ENCODE measurements at regions of chr12 and their contacts with region 1.

Region 1: DNA sequence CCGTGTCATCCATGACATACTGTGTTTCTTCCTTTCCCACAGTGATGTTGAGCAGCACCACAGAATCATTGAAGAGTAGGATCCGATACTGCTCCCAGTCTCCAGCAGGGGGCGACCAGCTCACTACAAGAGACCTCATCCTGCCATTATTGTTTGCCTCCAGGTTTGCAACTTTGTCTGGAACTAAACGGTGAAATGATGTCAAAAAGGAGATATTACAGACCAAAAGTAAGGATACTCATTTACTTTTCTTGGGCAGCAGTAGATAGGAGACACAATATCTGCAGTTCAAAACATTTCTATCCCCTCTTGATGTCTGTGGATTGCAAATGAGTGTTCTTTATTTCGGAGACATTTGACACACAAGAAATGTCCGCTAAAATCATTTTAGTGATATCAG is 47.2 kb downstream of the PTPRB start:
- DNase-seq: peak; percentile 62 to 63
- ATAC-seq: peak; percentile 84 to 99 (median 93)
- H3K4me3 ChIP-seq: no peak overlapping the region
- H3K4me3 Mint-ChIP-seq: no peak overlapping the region
- H3K27ac ChIP-seq: no peak overlapping the region
- H3K27ac Mint-ChIP-seq: peak overlapping the region in 1 of 2 donors; percentile 3
- H3K4me1 ChIP-seq: no peaks in the 10 kb centered on the region
- H3K4me1 Mint-ChIP-seq: peaks cover 0 to 6% of the 10 kb centered on the region in 2 donors
- H3K27me3 ChIP-seq: no peaks in the 10 kb centered on the region
- H3K27me3 Mint-ChIP-seq: peaks cover 0 to 3% of the 10 kb centered on the region in 2 donors
- CTCF ChIP-seq: peak; percentile 83

Region 2: DNA sequence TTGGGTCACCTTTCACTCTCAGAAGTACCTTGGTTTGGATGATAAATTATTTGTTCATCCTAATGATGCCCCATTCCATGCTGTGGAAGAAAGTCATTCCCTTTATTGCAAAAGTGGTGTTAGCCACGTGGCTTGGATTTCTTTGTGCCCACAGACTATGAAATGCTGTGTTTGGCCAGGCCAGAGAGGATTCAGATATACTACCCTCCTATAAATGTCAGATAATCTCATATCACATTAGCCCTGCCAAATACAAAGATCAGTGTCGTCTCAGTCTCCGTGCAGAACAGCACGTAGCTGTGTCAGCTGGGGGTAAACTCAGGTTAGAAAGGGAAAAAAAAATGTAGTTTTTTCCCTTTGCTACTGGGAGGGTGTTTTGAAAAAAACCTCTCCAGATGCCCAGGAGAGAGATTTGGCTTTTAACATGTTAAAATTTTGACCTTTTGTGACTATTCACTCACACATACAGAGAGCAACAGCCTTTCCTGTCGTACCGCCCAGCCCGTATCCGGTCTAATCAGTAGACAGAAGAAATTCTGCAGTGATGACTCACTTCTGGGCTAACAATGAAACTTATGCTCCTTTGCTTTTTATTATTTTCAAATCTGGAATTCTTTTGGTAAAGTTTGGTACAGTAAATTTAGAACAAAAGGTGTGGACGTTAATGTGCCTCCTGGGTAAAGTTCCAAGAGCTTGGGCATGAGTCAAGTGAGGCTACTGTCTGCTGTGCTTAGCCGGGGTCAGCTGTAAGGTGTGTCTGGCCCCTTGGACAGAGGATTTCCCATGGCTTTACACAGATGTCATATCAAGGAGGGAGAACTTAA is 55.7 kb after region 1 on chr12:
- intact Hi-C with region 1: loop called (anchors 10 kb)
- DNase-seq: peak; percentile 11 to 46
- ATAC-seq: peak; percentile 96 to 98 (median 96)
- H3K4me3 ChIP-seq: peak overlapping the region; percentile 11
- H3K4me3 Mint-ChIP-seq: peak overlapping the region; percentile 88
- H3K27ac ChIP-seq: peak overlapping the region; percentile 97
- H3K27ac Mint-ChIP-seq: peak overlapping the region; percentile 92 to 96
- H3K4me1 ChIP-seq: peaks cover 15% of the 10 kb centered on the region
- H3K4me1 Mint-ChIP-seq: peaks cover 42 to 51% of the 10 kb centered on the region in 2 donors
- H3K27me3 ChIP-seq: no peaks in the 10 kb centered on the region
- H3K27me3 Mint-ChIP-seq: no peaks in the 10 kb centered on the region
- CTCF ChIP-seq: no peak

Region 3: DNA sequence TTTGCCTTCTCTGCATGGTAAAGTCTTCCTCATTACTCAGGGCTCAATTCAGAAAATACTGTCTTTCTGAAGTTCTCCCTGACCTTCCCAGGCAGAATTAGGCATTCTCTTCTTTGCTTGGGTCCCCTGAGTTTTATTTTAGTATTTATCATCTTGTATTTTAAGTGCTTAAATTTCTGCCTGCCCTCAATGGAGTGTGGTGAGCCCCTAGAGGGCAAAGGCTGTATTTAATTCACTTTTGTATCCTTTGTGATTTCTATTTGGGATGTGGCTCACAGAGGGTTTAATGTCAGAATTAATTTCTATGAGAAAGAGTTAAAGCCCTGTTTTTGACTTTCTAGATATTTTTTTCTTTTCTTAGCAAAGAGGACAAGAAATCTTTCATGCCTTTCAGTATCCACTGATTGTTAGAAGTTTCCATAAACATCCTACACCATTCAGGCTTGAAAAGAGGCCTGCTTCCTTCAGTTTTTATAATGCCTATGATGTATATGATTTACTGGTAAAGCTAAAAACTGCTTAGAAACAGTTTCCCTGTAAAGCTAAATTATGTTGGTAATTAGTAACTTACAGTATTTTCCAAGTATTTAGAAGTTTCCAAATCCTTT is 102.7 kb after region 1 on chr12:
- intact Hi-C with region 1: loop called (anchors 1 kb)
- DNase-seq: no peak
- ATAC-seq: peak in 2 of 3 donors; percentile 71 to 77
- H3K4me3 ChIP-seq: no peak overlapping the region
- H3K4me3 Mint-ChIP-seq: no peak overlapping the region
- H3K27ac ChIP-seq: no peak overlapping the region
- H3K27ac Mint-ChIP-seq: peak overlapping the region; percentile 30 to 37
- H3K4me1 ChIP-seq: no peaks in the 10 kb centered on the region
- H3K4me1 Mint-ChIP-seq: peaks cover 5 to 6% of the 10 kb centered on the region in 2 donors
- H3K27me3 ChIP-seq: no peaks in the 10 kb centered on the region
- H3K27me3 Mint-ChIP-seq: peaks cover 0 to 6% of the 10 kb centered on the region in 2 donors
- CTCF ChIP-seq: peak; percentile 59

Region 4: GRCh38 chr12:70719672-70720420 is 129.8 kb after region 1 on chr12:
- intact Hi-C with region 1: loop called (anchors 1 kb)
- DNase-seq: peak; percentile 37 to 42
- ATAC-seq: peak; percentile 68 to 87 (median 83)
- H3K4me3 ChIP-seq: peak overlapping the region; percentile 12
- H3K4me3 Mint-ChIP-seq: peak overlapping the region; percentile 82
- H3K27ac ChIP-seq: no peak overlapping the region
- H3K27ac Mint-ChIP-seq: peak overlapping the region; percentile 36 to 89
- H3K4me1 ChIP-seq: peaks cover 5% of the 10 kb centered on the region
- H3K4me1 Mint-ChIP-seq: peaks cover 17 to 26% of the 10 kb centered on the region in 2 donors
- H3K27me3 ChIP-seq: peaks cover 2% of the 10 kb centered on the region
- H3K27me3 Mint-ChIP-seq: peaks cover 8 to 21% of the 10 kb centered on the region in 2 donors
- CTCF ChIP-seq: peak; percentile 94

Region 5: GRCh38 chr12:70733385-70733784 is 143.3 kb after region 1 on chr12:
- intact Hi-C with region 1: loop called (anchors 1 kb)
- DNase-seq: peak in 1 of 2 donors; percentile 49
- ATAC-seq: peak in 2 of 3 donors; percentile 78 to 79
- H3K4me3 ChIP-seq: no peak overlapping the region
- H3K4me3 Mint-ChIP-seq: no peak overlapping the region
- H3K27ac ChIP-seq: no peak overlapping the region
- H3K27ac Mint-ChIP-seq: no peak overlapping the region
- H3K4me1 ChIP-seq: no peaks in the 10 kb centered on the region
- H3K4me1 Mint-ChIP-seq: no peaks in the 10 kb centered on the region
- H3K27me3 ChIP-seq: no peaks in the 10 kb centered on the region
- H3K27me3 Mint-ChIP-seq: peaks cover 5 to 12% of the 10 kb centered on the region in 2 donors
- CTCF ChIP-seq: peak; percentile 55

Measured in natural killer cell (primary cell).